Tibial artery (tissue), 4 donors: ENCODE measurements at regions of chr1 and their contacts with region 1.

Region 1: DNA sequence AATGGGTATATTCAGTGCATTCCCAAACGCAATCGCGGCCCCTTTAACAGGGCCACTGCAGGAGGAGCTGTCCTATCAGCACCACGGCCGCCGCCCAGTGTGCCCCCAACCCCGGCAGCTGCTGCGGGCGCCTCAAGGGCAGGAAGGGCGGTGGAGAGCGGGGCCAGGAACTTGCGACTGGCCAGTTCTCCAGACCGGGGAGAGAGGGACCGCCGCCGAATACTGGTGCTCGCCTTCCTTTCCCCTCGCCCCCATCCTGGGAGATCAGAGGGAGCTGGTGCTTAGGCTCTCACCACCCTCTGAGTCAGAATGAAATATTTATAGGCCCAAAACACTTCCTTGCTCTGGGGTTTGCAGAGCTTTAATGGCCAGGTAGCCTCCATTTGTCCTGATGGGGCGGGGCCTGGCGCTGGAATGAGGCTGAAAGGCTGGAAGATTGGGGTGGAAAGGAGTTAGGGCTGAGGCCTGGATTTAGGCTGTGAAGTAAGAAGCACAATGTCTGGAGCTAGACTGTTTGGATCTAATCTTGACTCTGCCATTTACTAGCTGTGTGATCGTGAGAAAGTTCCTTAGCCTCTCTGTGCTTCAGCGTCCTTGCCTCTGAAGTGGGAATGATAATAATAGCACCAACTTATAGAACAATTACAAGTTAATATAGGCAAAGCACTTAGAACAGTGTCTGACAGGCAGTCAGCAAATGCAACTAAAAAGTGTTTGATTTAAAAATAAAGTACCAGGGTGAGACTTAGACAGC is 75.5 kb downstream of the NAV1 start:
- DNase-seq: no peak
- H3K4me3 ChIP-seq: no peak overlapping the region
- H3K27ac ChIP-seq: no peak overlapping the region
- H3K4me1 ChIP-seq: peaks cover 0 to 11% (median 4%) of the 10 kb centered on the region in 4 donors
- H3K27me3 ChIP-seq: no peaks in the 10 kb centered on the region
- CTCF ChIP-seq: no peak

Region 2: GRCh38 chr1:201268604-201269151 is 345.8 kb before region 1 on chr1:
- intact Hi-C with region 1: no loop called
- DNase-seq: no peak
- H3K4me3 ChIP-seq: no peak overlapping the region
- H3K27ac ChIP-seq: no peak overlapping the region
- H3K4me1 ChIP-seq: no peaks in the 10 kb centered on the region
- H3K27me3 ChIP-seq: peaks cover 0 to 34% of the 10 kb centered on the region in 2 donors
- CTCF ChIP-seq: no peak

Region 3: DNA sequence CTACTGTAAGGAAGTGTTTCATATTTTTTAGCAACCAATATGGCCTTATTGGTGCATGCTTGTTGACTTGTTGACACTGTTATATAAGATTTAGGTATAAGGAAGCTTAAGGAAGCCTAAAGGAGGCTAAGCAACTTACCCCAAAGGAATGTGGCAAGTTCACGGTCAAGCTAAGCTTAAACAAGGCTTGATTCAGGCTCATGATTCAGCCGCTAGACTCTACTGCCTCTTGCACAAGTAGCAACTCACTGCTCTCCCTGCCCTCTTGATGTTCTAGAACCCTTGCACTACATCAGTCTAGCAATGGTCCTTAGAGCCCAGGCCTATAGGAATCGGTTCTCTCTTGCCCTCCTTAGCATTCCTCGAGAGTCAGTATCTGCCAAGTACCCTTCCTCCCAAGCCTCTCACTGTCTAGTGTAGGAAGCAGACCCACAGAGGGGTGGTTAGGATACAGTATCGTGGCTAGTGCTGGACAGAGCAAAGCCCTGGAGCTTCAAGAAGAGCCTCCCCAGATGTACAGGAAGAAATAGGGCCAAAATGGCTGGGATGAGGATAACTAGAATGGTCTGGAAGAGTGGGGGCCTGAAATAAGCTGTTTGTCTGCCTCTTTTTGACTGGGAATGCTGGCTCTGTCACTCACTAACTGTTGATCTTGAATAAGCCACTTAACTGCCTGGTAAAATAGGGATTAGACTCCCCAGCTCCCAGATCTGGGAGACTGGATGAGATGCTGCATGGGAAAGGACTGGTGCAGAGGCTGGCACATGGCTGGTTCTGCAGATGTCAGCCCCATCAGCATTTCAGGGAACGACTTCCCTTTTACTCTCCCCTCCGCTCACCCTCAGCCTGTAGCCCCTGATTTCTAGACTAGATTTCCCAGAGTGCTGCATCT is 46.7 kb after region 1 on chr1:
- intact Hi-C with region 1: loop called (anchors 5 kb)
- DNase-seq: no peak
- H3K4me3 ChIP-seq: no peak overlapping the region
- H3K27ac ChIP-seq: no peak overlapping the region
- H3K4me1 ChIP-seq: peaks cover 0 to 5% (median 0%) of the 10 kb centered on the region in 4 donors
- H3K27me3 ChIP-seq: no peaks in the 10 kb centered on the region
- CTCF ChIP-seq: no peak